ENCODE measurements at regions of chr12 and their contacts with region 1.

Region 1: DNA sequence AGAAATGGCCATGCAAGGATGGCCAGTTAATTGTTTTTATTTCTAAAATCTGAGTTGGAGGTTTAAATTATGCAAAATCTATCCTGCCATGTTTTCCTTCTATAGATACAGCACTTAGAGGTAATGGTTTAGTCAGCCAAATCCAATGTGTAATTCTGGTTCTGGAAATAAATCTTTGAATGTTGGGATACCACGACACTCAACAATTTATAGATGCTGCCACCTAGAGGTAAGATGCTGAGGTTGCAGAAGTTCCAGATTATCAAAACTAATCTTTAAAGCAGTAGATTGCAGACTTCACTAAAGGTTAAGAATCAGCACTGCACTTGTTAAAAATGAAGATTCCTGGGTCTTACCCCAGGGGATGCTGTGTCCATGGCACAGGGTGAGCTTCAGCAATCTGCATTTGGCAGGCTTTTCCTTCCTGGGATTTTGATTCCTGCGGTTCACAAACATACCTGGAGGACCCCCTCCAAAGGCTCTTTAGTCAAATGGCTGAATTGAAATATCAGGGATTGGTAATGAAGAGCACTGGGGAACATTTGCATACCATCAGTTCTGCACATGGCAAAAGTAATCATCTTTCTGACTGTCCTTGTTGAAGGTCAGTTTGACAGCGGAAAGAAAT is 53.4 kb upstream of the ANO4 start:
- DNase-seq: no peak
- ATAC-seq: no peak
- H3K4me3 ChIP-seq: no peak overlapping the region
- H3K27ac ChIP-seq: no peak overlapping the region
- H3K4me1 ChIP-seq: no peaks in the 10 kb centered on the region
- H3K27me3 ChIP-seq: peaks cover 0 to 14% (median 2%) of the 10 kb centered on the region in 7 donors
- CTCF ChIP-seq: peak; percentile 48 to 79 (median 62)

Region 2: DNA sequence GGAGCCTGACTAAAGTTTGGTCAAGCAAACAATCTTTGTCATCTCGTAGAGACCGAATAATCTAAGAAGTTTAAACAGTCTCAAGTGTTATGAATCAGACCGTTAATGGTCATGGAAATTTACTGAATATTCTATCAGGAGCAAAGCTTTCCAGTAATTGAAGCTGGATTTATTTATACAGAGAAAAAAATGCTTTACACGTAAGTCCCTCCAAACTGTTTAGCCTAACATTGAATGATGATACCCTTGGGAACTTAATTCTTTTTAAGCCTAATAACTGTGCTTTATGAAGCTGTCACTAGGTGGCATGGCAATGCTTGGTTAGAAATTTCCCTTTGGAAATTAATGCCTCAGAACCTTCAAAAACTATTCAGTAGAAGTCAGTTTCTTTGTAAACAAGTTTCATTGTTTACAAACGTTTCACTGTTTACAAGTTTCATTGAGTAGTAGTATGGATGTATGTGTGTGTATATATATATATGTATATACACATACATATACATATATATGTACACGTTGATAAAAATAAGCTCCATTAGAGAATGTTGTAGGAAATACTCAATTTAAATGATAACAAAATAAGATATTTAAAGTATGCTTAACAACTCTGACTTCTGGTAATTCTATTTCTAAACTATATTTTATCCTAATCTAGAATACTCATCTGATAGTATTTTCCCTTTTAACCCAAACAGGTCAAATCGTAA is 506.4 kb before region 1 on chr12:
- intact Hi-C with region 1: loop called in 5 of 10 experiments (anchors 1 to 10 kb)
- DNase-seq: no peak
- ATAC-seq: peak in 7 of 8 donors; percentile 13 to 79 (median 63)
- H3K4me3 ChIP-seq: no peak overlapping the region
- H3K27ac ChIP-seq: peak overlapping the region in 4 of 10 donors; percentile 17 to 36 (median 28)
- H3K4me1 ChIP-seq: no peaks in the 10 kb centered on the region
- H3K27me3 ChIP-seq: no peaks in the 10 kb centered on the region
- CTCF ChIP-seq: peak; percentile 61 to 90 (median 81)

Region 3: GRCh38 chr12:100348657-100349454 is 392.3 kb before region 1 on chr12:
- intact Hi-C with region 1: loop called in 5 of 10 experiments (anchors 5 to 10 kb)
- DNase-seq: no peak
- ATAC-seq: peak in 2 of 8 donors; percentile 42 to 50
- H3K4me3 ChIP-seq: no peak overlapping the region
- H3K27ac ChIP-seq: no peak overlapping the region
- H3K4me1 ChIP-seq: no peaks in the 10 kb centered on the region
- H3K27me3 ChIP-seq: peaks cover 0 to 4% (median 0%) of the 10 kb centered on the region in 7 donors
- CTCF ChIP-seq: peak in 7 of 9 donors; percentile 21 to 63 (median 50)

Region 4: DNA sequence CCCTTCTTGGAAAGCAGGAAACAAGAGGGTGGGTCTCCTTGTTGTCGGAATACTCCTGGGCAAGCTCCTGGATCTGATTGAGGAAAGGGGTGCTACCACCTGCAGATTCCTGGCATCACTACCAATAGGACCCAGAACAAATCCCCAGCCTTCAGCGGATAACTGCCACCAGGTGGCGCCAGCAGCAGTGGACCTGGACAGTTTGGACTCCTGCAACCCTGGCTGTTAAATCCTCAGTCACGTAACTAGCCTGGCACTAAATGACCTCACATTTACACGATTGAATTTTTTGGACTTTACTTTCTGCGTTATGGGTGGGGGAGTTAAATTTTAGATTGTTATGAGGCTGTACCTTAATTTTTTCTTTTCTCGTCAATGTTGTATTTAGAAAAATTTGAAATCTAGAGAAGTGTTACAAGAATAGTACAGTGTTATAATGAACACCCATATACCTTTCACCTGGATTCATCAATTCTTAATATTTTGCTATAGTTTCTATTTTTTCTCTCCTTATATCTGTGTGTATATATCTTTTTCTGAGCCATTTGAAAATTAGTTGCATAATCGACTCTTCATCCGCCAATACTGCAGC is 72.2 kb before region 1 on chr12:
- intact Hi-C with region 1: loop called in 1 of 10 experiments (anchors 5 kb)
- DNase-seq: peak; percentile 43 to 61
- ATAC-seq: peak in 3 of 8 donors; percentile 39 to 53 (median 49)
- H3K4me3 ChIP-seq: no peak overlapping the region
- H3K27ac ChIP-seq: no peak overlapping the region
- H3K4me1 ChIP-seq: no peaks in the 10 kb centered on the region
- H3K27me3 ChIP-seq: peaks cover 0 to 13% (median 7%) of the 10 kb centered on the region in 7 donors
- CTCF ChIP-seq: peak; percentile 30 to 80 (median 66)

Measured in heart right ventricle (tissue), 16 donors.